Naive thymus-derived CD4-positive, alpha-beta T cell (primary cell): ENCODE measurements at regions of chr14 and their contacts with region 1.

Region 1: GRCh38 chr14:75982266-75983018 is 647 bp upstream of the TGFB3 start:
- DNase-seq: peak; percentile 69 to 83 (median 80)
- ATAC-seq: peak; percentile 83
- H3K4me3 ChIP-seq: peak overlapping the region; percentile 83
- H3K4me3 Mint-ChIP-seq: peak overlapping the region; percentile 80 to 99 (median 88)
- H3K27ac ChIP-seq: peak overlapping the region; percentile 84
- H3K27ac Mint-ChIP-seq: peak overlapping the region; percentile 58 to 97 (median 90)
- H3K4me1 ChIP-seq: peaks cover 18 to 32% of the 10 kb centered on the region in 2 donors
- H3K4me1 Mint-ChIP-seq: peaks cover 43 to 64% (median 56%) of the 10 kb centered on the region in 7 donors
- H3K27me3 ChIP-seq: no peaks in the 10 kb centered on the region
- H3K27me3 Mint-ChIP-seq: peaks cover 0 to 24% (median 0%) of the 10 kb centered on the region in 5 donors

Region 2: GRCh38 chr14:75293920-75294642 is 688.4 kb before region 1 on chr14:
- CTCF ChIA-PET with region 1: no interaction called
- POLR2A ChIA-PET with region 1: no interaction called
- intact Hi-C with region 1: loop called in 1 of 2 experiments (anchors 10 kb)
- DNase-seq: peak; percentile 92 to 98 (median 96)
- ATAC-seq: peak; percentile 92
- H3K4me3 ChIP-seq: peak overlapping the region; percentile 61
- H3K4me3 Mint-ChIP-seq: peak overlapping the region; percentile 79 to 93 (median 91)
- H3K27ac ChIP-seq: peak overlapping the region; percentile 96
- H3K27ac Mint-ChIP-seq: peak overlapping the region; percentile 85 to 97 (median 94)
- H3K4me1 ChIP-seq: peaks cover 17 to 25% of the 10 kb centered on the region in 2 donors
- H3K4me1 Mint-ChIP-seq: peaks cover 10 to 26% (median 22%) of the 10 kb centered on the region in 7 donors
- H3K27me3 ChIP-seq: no peaks in the 10 kb centered on the region
- H3K27me3 Mint-ChIP-seq: peaks cover 0 to 24% (median 0%) of the 10 kb centered on the region in 5 donors

Region 3: DNA sequence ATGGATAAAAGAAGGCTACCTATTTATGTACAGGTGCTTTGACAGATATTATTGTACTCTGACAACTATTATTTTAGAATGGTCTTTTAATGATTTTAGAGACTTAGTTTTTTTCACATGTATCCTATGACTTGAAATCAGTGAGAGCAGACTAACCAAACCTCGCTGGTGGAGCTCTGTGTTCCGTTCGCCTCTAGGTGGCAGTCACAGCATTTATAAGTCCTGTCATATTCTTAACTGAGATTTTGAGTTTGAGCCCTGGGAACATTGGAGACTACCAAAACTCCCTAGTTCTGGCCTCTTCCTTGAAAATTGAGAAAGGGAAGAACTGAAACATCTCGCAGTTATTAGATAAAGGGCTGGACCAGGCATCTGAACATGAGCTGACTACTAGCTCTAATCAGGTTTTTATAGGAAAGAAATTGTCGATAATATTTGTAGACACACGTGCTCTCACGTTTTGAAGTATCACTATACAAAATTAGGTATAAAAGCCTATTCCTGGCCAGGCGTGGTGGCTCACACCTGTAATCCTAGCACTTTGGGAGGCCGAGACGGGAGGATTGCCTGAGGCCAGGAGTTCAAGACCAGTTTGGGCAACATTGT is 273.1 kb before region 1 on chr14:
- CTCF ChIA-PET with region 1: interaction called, 48 read pairs
- POLR2A ChIA-PET with region 1: interaction called, 12 read pairs
- intact Hi-C with region 1: loop called (anchors 1 kb)
- DNase-seq: peak in 8 of 9 donors; percentile 33 to 65 (median 56)
- ATAC-seq: peak; percentile 83
- H3K4me3 ChIP-seq: no peak overlapping the region
- H3K4me3 Mint-ChIP-seq: no peak overlapping the region
- H3K27ac ChIP-seq: no peak overlapping the region
- H3K27ac Mint-ChIP-seq: no peak overlapping the region
- H3K4me1 ChIP-seq: no peaks in the 10 kb centered on the region
- H3K4me1 Mint-ChIP-seq: no peaks in the 10 kb centered on the region
- H3K27me3 ChIP-seq: no peaks in the 10 kb centered on the region
- H3K27me3 Mint-ChIP-seq: no peaks in the 10 kb centered on the region

Region 4: GRCh38 chr14:75738192-75738591 is 244.2 kb before region 1 on chr14:
- CTCF ChIA-PET with region 1: no interaction called
- POLR2A ChIA-PET with region 1: no interaction called
- intact Hi-C with region 1: no loop called
- DNase-seq: no peak
- ATAC-seq: no peak
- H3K4me3 ChIP-seq: no peak overlapping the region
- H3K4me3 Mint-ChIP-seq: no peak overlapping the region
- H3K27ac ChIP-seq: no peak overlapping the region
- H3K27ac Mint-ChIP-seq: no peak overlapping the region
- H3K4me1 ChIP-seq: no peaks in the 10 kb centered on the region
- H3K4me1 Mint-ChIP-seq: no peaks in the 10 kb centered on the region
- H3K27me3 ChIP-seq: no peaks in the 10 kb centered on the region
- H3K27me3 Mint-ChIP-seq: no peaks in the 10 kb centered on the region

Region 5: GRCh38 chr14:76007852-76008251 is 25.4 kb after region 1 on chr14:
- CTCF ChIA-PET with region 1: no interaction called
- POLR2A ChIA-PET with region 1: no interaction called
- intact Hi-C with region 1: no loop called
- DNase-seq: no peak
- ATAC-seq: no peak
- H3K4me3 ChIP-seq: no peak overlapping the region
- H3K4me3 Mint-ChIP-seq: no peak overlapping the region
- H3K27ac ChIP-seq: no peak overlapping the region
- H3K27ac Mint-ChIP-seq: no peak overlapping the region
- H3K4me1 ChIP-seq: no peaks in the 10 kb centered on the region
- H3K4me1 Mint-ChIP-seq: no peaks in the 10 kb centered on the region
- H3K27me3 ChIP-seq: no peaks in the 10 kb centered on the region
- H3K27me3 Mint-ChIP-seq: no peaks in the 10 kb centered on the region

Region 6: GRCh38 chr14:76151398-76152339 is 169.2 kb after region 1 on chr14 and contains the start of gene GPATCH2L:
- CTCF ChIA-PET with region 1: interaction called, 3 read pairs
- POLR2A ChIA-PET with region 1: no interaction called
- intact Hi-C with region 1: loop called (anchors 1 to 5 kb)
- DNase-seq: peak; percentile 90 to 98 (median 95)
- ATAC-seq: peak; percentile 96
- H3K4me3 ChIP-seq: peak within 1 kb of the TSS; percentile 91
- H3K4me3 Mint-ChIP-seq: peak within 1 kb of the TSS; percentile 89 to 98 (median 95)
- H3K27ac ChIP-seq: peak within 1 kb of the TSS; percentile 95
- H3K27ac Mint-ChIP-seq: peak within 1 kb of the TSS; percentile 86 to 98 (median 96)
- H3K4me1 ChIP-seq: peaks cover 40 to 44% of the 10 kb centered on the region in 2 donors
- H3K4me1 Mint-ChIP-seq: peaks cover 40 to 56% (median 53%) of the 10 kb centered on the region in 7 donors
- H3K27me3 ChIP-seq: no peaks in the 10 kb centered on the region
- H3K27me3 Mint-ChIP-seq: peaks cover 0 to 18% (median 0%) of the 10 kb centered on the region in 5 donors
- total RNA-seq, gene GPATCH2L: 60.4 to 83.1 (median 66.6) TPM